ENCODE measurements at regions of chr2 and their contacts with region 1.

Region 1: GRCh38 chr2:18749912-18750526 is 160.7 kb upstream of the NT5C1B start:
- DNase-seq: peak; percentile 66
- ATAC-seq: peak; percentile 72; the same call in 1 of the 2 replicates
- H3K4me3 ChIP-seq: no peak overlapping the region
- H3K27ac ChIP-seq: no peak overlapping the region
- H3K4me1 ChIP-seq: peaks cover 5% of the 10 kb centered on the region; the same call in 1 of the 2 replicates
- H3K27me3 ChIP-seq: no peaks in the 10 kb centered on the region
- CTCF ChIP-seq: peak; percentile 93
- POLR2A ChIP-seq: 0 out of 2 replicates have a peak, but pooled peaks have one; percentile 35
- RAD21 ChIP-seq: peak; percentile 97

Region 2: GRCh38 chr2:18435421-18436037 is 314.5 kb before region 1 on chr2:
- CTCF ChIA-PET with region 1: no interaction called
- POLR2A ChIA-PET with region 1: no interaction called
- dilution Hi-C with region 1: no loop called
- in situ Hi-C with region 1: loop called (anchors 10 kb)
- intact Hi-C with region 1: loop called (anchors 2 kb)
- DNase-seq: peak; percentile 79
- ATAC-seq: peak; percentile 57
- H3K4me3 ChIP-seq: no peak overlapping the region
- H3K27ac ChIP-seq: no peak overlapping the region
- H3K4me1 ChIP-seq: peaks cover 12% of the 10 kb centered on the region
- H3K27me3 ChIP-seq: no peaks in the 10 kb centered on the region
- CTCF ChIP-seq: peak; percentile 75
- POLR2A ChIP-seq: 0 out of 2 replicates have a peak, but pooled peaks have one; percentile 28
- RAD21 ChIP-seq: peak; percentile 84

Region 3: GRCh38 chr2:18719978-18720775 is 29.8 kb before region 1 on chr2:
- CTCF ChIA-PET with region 1: no interaction called
- POLR2A ChIA-PET with region 1: no interaction called
- dilution Hi-C with region 1: no loop called
- in situ Hi-C with region 1: no loop called
- intact Hi-C with region 1: no loop called
- DNase-seq: peak; percentile 58
- ATAC-seq: peak; percentile 82
- H3K4me3 ChIP-seq: no peak overlapping the region
- H3K27ac ChIP-seq: no peak overlapping the region
- H3K4me1 ChIP-seq: peaks cover 1% of the 10 kb centered on the region; the same call in 1 of the 2 replicates
- H3K27me3 ChIP-seq: no peaks in the 10 kb centered on the region
- CTCF ChIP-seq: no peak
- POLR2A ChIP-seq: no peak
- RAD21 ChIP-seq: no peak

Region 4: DNA sequence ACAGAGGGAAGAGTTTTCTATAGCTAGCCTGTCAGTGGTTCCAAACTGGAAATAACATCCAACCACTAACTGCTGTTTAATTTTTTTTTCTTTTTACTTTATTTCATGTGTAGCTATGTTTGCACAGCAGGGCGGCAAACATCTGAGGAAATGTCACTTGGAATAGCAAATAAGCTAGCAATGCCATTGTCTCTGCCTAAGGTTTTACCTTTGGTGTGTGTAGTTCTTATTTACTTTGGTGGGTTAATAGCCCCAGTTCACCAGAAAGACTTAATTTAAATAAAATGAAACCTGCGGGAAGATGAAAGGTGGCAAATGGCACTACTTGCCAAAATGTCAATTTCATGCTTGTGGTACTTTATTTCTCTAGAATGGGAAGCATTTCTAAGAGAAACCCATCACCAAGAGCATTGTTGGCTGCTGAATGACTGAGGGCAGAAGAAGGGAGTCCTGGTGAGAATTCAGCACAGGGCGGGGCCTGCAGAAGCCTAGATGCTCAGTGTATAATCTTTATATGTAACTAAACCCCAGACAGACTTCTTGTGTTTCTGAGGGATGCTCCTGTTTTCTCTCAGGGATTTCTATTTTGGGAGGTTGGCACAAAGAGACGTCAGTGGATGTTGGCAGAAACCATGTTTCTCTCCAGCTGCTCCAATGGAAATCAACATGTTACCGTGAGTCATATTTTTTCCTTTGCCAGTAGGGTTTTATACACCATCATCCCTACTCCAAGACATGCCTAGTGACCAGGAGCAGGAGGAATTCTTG is 139.7 kb after region 1 on chr2:
- CTCF ChIA-PET with region 1: no interaction called
- POLR2A ChIA-PET with region 1: no interaction called
- dilution Hi-C with region 1: no loop called
- in situ Hi-C with region 1: no loop called
- intact Hi-C with region 1: loop called (anchors 5 kb)
- DNase-seq: no peak
- ATAC-seq: no peak
- H3K4me3 ChIP-seq: no peak overlapping the region
- H3K27ac ChIP-seq: no peak overlapping the region
- H3K4me1 ChIP-seq: peaks cover 14% of the 10 kb centered on the region
- H3K27me3 ChIP-seq: no peaks in the 10 kb centered on the region
- CTCF ChIP-seq: no peak
- POLR2A ChIP-seq: no peak
- RAD21 ChIP-seq: no peak

Region 5: DNA sequence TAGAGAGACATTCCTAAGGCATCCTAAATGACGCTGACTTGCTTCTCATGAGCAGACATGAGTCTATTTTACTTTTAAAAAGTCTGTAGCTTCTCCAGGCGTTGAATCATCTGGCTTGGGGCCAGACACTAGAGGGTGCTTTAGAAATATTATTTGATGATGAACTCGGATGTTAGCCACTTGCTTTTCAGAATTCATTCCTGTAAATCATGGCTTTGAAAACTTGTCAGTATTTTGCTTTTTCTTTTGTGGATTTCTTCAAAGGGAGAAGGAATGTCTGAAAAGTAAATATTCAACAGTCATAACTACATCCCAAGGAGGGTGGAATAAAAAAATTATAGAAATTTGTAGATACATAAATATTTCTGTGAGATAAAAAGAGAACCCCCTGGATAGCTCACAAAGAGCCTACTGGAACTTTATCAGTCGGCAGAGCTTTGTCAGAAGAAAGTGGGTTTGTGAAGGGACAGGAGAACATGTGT is 237.6 kb after region 1 on chr2:
- CTCF ChIA-PET with region 1: interaction called, 4 read pairs
- POLR2A ChIA-PET with region 1: interaction called, 4 read pairs
- dilution Hi-C with region 1: no loop called
- in situ Hi-C with region 1: no loop called
- intact Hi-C with region 1: loop called (anchors 2 kb)
- DNase-seq: peak; percentile 95
- ATAC-seq: peak; percentile 62
- H3K4me3 ChIP-seq: no peak overlapping the region
- H3K27ac ChIP-seq: peak overlapping the region; percentile 63; the same call in 1 of the 2 replicates
- H3K4me1 ChIP-seq: peaks cover 11% of the 10 kb centered on the region
- H3K27me3 ChIP-seq: no peaks in the 10 kb centered on the region
- CTCF ChIP-seq: peak; percentile 44
- POLR2A ChIP-seq: no peak
- RAD21 ChIP-seq: peak; percentile 27

Region 6: DNA sequence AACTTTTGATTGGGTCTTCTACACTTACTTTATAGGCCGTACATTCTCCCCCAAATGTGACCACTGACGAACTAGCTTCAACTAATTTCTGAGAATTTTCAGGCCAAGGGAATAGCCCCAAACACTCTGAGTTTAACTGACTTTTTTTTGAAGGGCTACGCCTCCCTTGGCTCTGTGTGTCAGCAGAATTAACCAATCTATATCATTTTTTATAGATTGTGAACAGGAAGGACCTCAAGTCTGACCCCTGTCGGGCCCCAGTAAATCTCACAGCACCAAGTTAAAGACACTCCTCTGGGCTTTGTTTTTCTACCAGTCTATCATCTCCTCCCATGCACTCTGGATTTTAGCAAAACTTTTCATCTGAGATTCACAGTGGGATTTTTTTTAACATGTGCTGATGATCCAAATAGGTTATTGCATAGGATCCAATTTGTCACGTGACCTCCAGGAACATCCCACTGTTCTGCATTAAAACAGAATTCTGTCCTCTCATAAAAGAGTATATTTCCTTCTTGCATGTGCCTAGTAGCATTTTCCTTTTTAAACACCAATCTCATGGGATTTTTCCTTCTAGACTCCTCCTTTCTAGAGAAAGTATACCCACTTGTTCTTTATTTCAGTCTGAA is 301.3 kb after region 1 on chr2:
- CTCF ChIA-PET with region 1: no interaction called
- POLR2A ChIA-PET with region 1: no interaction called
- dilution Hi-C with region 1: no loop called
- in situ Hi-C with region 1: no loop called
- intact Hi-C with region 1: no loop called
- DNase-seq: no peak
- ATAC-seq: no peak
- H3K4me3 ChIP-seq: no peak overlapping the region
- H3K27ac ChIP-seq: no peak overlapping the region
- H3K4me1 ChIP-seq: peaks cover 6% of the 10 kb centered on the region; the same call in 1 of the 2 replicates
- H3K27me3 ChIP-seq: no peaks in the 10 kb centered on the region
- CTCF ChIP-seq: no peak
- POLR2A ChIP-seq: no peak
- RAD21 ChIP-seq: no peak

Region 7: GRCh38 chr2:19140596-19141219 is 390.7 kb after region 1 on chr2:
- CTCF ChIA-PET with region 1: no interaction called
- POLR2A ChIA-PET with region 1: no interaction called
- dilution Hi-C with region 1: no loop called
- in situ Hi-C with region 1: no loop called
- intact Hi-C with region 1: loop called (anchors 5 kb)
- DNase-seq: peak; percentile 95
- ATAC-seq: peak; percentile 86
- H3K4me3 ChIP-seq: no peak overlapping the region
- H3K27ac ChIP-seq: peak overlapping the region; percentile 80
- H3K4me1 ChIP-seq: peaks cover 19% of the 10 kb centered on the region
- H3K27me3 ChIP-seq: no peaks in the 10 kb centered on the region
- CTCF ChIP-seq: no peak
- POLR2A ChIP-seq: no peak
- RAD21 ChIP-seq: no peak

Region 8: GRCh38 chr2:19362755-19363473 is 612.9 kb after region 1 on chr2:
- CTCF ChIA-PET with region 1: interaction called, 3 read pairs
- POLR2A ChIA-PET with region 1: no interaction called
- dilution Hi-C with region 1: no loop called
- in situ Hi-C with region 1: loop called (anchors 5 kb)
- intact Hi-C with region 1: loop called (anchors 1 kb)
- DNase-seq: peak; percentile 86
- ATAC-seq: peak; percentile 57
- H3K4me3 ChIP-seq: peak overlapping the region; percentile 96
- H3K27ac ChIP-seq: peak overlapping the region; percentile 43; the same call in 1 of the 2 replicates
- H3K4me1 ChIP-seq: peaks cover 5% of the 10 kb centered on the region; the same call in 1 of the 2 replicates
- H3K27me3 ChIP-seq: peaks cover 11% of the 10 kb centered on the region
- CTCF ChIP-seq: peak; percentile 90
- POLR2A ChIP-seq: no peak
- RAD21 ChIP-seq: peak; percentile 92

Region 9: GRCh38 chr2:19863303-19864041 is 1113.5 kb after region 1 on chr2:
- CTCF ChIA-PET with region 1: no interaction called
- POLR2A ChIA-PET with region 1: no interaction called
- dilution Hi-C with region 1: no loop called
- in situ Hi-C with region 1: loop called (anchors 10 kb)
- intact Hi-C with region 1: loop called (anchors 2 kb)
- DNase-seq: peak; percentile 45
- ATAC-seq: peak; percentile 76
- H3K4me3 ChIP-seq: no peak overlapping the region
- H3K27ac ChIP-seq: no peak overlapping the region
- H3K4me1 ChIP-seq: peaks cover 14% of the 10 kb centered on the region
- H3K27me3 ChIP-seq: peaks cover 3% of the 10 kb centered on the region
- CTCF ChIP-seq: peak; percentile 83
- POLR2A ChIP-seq: no peak
- RAD21 ChIP-seq: peak; percentile 98